Breast epithelium (tissue), 4 donors: ENCODE measurements at regions of chr13 and their contacts with region 1.

Region 1: GRCh38 chr13:94362411-94362909 is 117.0 kb downstream of the DCT start:
- DNase-seq: peak in 1 of 2 donors; percentile 28
- H3K4me3 ChIP-seq: no peak overlapping the region
- H3K27ac ChIP-seq: no peak overlapping the region
- H3K4me1 ChIP-seq: no peaks in the 10 kb centered on the region
- H3K27me3 ChIP-seq: no peaks in the 10 kb centered on the region
- CTCF ChIP-seq: peak; percentile 58 to 82 (median 78)
- POLR2A ChIP-seq: no peak

Region 2: DNA sequence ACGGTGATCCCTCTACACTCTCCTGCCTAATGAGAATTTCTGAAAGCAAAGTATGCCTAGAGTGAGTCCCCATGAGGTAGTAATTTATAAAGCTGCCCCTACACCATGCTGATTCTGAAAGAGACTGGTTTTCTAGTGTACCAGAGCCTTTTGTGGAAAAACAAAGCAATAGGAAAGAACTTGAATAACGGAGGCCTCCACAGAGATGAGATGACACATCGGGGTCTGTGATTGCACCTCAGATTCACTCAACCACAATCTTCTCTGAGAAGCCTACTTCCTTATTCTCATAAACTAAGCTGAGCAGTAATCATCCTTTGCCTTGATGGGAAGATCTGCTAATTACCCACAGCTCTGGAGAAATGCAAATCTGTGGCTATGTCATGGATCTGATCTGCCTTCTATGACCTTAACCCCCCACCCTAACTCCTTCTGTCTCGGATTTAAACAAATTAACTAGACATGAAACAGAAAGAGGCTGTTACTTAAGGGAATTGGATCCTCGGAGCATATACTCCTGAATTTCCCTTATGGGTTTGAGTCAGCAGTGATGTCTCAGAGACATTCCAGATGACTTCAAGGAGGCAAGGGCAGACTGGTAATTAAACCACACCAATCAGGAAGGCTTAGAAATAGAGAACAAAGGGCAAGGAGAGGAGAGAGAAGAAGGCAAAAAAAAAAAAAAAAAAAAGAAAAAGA is 11.0 kb before region 1 on chr13:
- intact Hi-C with region 1: loop called (anchors 1 kb)
- DNase-seq: no peak
- H3K4me3 ChIP-seq: no peak overlapping the region
- H3K27ac ChIP-seq: no peak overlapping the region
- H3K4me1 ChIP-seq: no peaks in the 10 kb centered on the region
- H3K27me3 ChIP-seq: no peaks in the 10 kb centered on the region
- CTCF ChIP-seq: no peak
- POLR2A ChIP-seq: no peak